A549 (cell line): ENCODE measurements at regions of chr3 and their contacts with region 1.

Region 1: DNA sequence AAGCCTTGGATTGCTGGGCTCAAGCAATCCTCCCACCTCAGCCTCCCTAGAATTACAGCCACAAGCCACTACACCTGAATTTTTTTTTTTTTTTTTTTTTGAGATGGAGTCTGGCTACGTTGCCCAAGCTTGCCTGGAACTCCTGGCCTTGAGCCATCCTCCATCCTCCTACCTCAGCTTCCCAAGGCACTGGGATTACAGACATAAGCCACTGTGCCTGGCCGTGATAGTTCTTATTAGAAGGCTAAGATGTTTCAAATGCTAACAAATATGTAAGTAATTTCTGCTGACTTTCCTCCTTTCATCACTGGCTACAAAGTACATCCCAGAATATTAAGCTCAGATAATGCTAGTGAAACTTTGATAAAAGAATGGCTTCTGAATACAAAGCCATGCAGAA is 5.7 kb upstream of the SETMAR start:
- DNase-seq: no peak
- ATAC-seq: no peak
- H3K4me3 ChIP-seq: no peak overlapping the region
- H3K27ac ChIP-seq: no peak overlapping the region
- H3K4me1 ChIP-seq: no peaks in the 10 kb centered on the region
- CTCF ChIP-seq: no peak
- EP300 ChIP-seq: no peak
- POLR2A ChIP-seq: no peak
- RAD21 ChIP-seq: no peak

Region 2: GRCh38 chr3:4052706-4053105 is 244.8 kb before region 1 on chr3:
- CTCF ChIA-PET with region 1: no interaction called
- POLR2A ChIA-PET with region 1: no interaction called
- DNase-seq: no peak
- ATAC-seq: no peak
- H3K4me3 ChIP-seq: no peak overlapping the region
- H3K27ac ChIP-seq: no peak overlapping the region
- H3K4me1 ChIP-seq: no peaks in the 10 kb centered on the region
- CTCF ChIP-seq: no peak
- EP300 ChIP-seq: no peak
- POLR2A ChIP-seq: no peak
- RAD21 ChIP-seq: no peak

Region 3: DNA sequence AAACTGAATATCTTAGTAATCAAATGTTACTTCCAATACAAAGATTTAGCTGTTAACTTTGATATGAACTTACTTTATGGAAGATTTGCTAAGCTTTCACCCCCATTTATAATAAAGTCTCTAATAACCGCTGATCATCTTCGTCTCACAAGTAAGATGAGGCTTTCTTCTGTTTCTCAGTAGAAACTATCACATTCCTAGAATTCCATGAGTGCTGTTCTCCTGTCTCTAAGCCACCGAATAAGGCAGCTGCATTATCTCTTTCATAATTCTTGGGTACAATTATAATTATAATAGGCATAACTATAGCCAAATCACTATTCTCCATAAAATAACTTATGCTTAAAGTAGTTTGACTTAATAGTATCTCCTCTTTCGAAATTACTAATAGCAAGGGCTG is 12.6 kb before region 1 on chr3:
- CTCF ChIA-PET with region 1: interaction called, 12 read pairs
- POLR2A ChIA-PET with region 1: no interaction called
- DNase-seq: no peak
- ATAC-seq: no peak
- H3K4me3 ChIP-seq: no peak overlapping the region
- H3K27ac ChIP-seq: no peak overlapping the region
- H3K4me1 ChIP-seq: no peaks in the 10 kb centered on the region
- CTCF ChIP-seq: no peak
- EP300 ChIP-seq: no peak
- POLR2A ChIP-seq: no peak
- RAD21 ChIP-seq: no peak

Region 4: GRCh38 chr3:4313606-4314293 is 16.3 kb after region 1 on chr3:
- CTCF ChIA-PET with region 1: no interaction called
- POLR2A ChIA-PET with region 1: no interaction called
- DNase-seq: peak in 1 of 2 experiments; percentile 4
- ATAC-seq: peak in 1 of 2 experiments; percentile 26; a peak in 2 of 6 replicates
- H3K4me3 ChIP-seq: no peak overlapping the region
- H3K27ac ChIP-seq: no peak overlapping the region
- H3K4me1 ChIP-seq: no peaks in the 10 kb centered on the region
- CTCF ChIP-seq: no peak
- EP300 ChIP-seq: no peak
- POLR2A ChIP-seq: no peak
- RAD21 ChIP-seq: no peak